Ascending aorta (tissue), 2 donors: ENCODE measurements at regions of chr1 and their contacts with region 1.

Region 1: DNA sequence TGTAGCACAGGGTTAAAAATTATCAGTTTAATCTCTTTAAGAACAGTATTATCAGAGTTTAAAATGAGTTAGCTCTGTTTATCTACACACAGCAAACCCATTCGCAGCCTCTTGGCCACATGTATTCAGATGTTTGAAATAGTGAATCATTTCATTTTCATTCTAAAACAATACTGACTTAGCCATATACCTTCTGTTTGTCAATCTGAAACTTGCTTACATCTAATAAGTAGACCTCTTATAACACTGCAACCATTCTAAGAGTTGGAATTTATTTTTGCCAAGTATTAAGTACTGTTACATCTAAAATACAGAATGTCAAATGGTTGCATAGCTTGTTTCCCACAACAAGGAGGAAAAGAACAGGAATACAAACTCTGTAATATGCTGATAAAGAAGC is 25.4 kb downstream of the ANGEL2 start:
- DNase-seq: no peak
- H3K4me3 ChIP-seq: no peak overlapping the region
- H3K27ac ChIP-seq: no peak overlapping the region
- H3K4me1 ChIP-seq: no peaks in the 10 kb centered on the region
- H3K27me3 ChIP-seq: no peaks in the 10 kb centered on the region
- CTCF ChIP-seq: no peak

Region 2: DNA sequence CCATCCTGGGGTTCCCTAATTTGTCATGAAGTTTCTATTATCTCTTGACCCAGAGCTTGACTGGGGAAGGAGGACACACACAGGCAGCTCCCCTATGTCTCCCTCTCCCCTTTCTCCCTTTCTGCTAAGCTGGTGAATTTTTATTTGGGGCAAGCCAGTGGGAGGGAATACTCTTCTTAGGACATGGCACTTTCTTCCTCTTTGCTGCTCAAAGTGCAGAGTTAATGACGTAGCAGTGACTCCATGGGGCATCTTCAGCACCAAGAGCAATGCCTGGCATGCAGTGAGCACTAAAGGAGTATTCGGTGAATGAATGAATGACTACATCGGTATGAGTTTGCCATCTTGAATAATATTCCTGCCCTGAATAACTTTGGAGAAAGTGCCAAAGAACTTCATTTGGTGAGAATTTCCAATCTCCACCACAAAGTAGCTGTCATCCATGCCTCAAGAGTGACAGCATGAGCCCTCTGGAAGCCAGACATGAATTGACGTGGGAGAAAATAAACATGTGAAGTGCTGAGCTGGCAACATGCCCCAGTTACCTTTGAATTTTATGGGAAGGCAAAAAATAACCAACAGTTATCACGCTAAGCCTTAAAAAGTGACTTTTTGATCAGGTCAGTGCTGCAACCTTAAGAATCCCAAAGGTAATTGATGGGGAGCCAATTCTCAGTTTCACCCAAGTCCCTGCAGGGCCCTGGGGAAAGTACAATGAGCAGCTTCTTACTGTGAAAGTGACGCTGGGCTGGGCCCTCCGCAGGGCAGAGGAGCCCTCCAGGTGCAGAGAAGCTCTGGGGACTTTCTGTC is 403.9 kb before region 1 on chr1:
- intact Hi-C with region 1: no loop called
- DNase-seq: no peak
- H3K4me3 ChIP-seq: no peak overlapping the region
- H3K27ac ChIP-seq: no peak overlapping the region
- H3K4me1 ChIP-seq: no peaks in the 10 kb centered on the region
- H3K27me3 ChIP-seq: peaks cover 4% of the 10 kb centered on the region
- CTCF ChIP-seq: no peak

Region 3: GRCh38 chr1:212665241-212666115 is 324.8 kb before region 1 on chr1:
- intact Hi-C with region 1: loop called (anchors 5 kb)
- DNase-seq: peak; percentile 42 to 88
- H3K4me3 ChIP-seq: peak overlapping the region; percentile 64 to 71
- H3K27ac ChIP-seq: peak overlapping the region; percentile 48 to 55
- H3K4me1 ChIP-seq: peaks cover 0 to 9% of the 10 kb centered on the region in 2 donors
- H3K27me3 ChIP-seq: no peaks in the 10 kb centered on the region
- CTCF ChIP-seq: peak; percentile 92 to 98 (median 94)

Region 4: DNA sequence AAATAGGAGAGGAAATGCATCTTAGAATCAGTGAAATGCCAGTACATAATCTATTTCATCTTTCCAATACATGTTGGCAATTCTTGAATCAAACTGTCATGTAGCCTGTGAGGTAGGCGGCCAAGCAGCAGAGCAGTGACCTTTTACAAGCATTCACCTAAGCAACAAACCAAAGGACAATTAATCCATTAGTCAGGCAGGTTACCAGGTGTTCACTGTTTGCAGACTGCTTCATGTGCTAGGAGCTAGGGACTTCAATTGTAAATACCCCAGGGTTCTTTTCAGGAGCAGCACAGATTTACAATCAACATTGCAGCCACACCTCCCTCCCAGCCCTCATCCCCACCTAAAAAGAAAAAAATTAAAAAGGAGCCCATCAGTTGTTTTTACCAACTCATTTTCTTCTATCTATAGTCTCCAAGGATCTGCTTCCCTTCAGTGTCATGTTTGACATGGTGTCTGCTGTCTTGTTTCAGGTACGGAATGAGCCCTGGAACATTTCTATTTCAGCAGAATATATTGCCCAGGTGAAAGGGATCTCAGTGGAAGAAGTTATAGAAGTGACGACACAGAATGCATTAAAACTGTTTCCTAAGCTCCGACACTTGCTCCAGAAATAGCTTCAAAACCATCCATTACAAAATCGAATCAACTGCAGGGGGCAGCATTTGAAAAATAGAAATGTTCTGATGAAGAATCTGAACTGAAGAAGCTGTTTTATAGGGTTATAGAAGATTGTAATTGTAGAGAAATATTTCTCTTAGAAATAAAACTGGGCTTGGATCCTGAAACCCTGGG is 175.5 kb before region 1 on chr1:
- intact Hi-C with region 1: loop called (anchors 5 kb)
- DNase-seq: no peak
- H3K4me3 ChIP-seq: no peak overlapping the region
- H3K27ac ChIP-seq: no peak overlapping the region
- H3K4me1 ChIP-seq: no peaks in the 10 kb centered on the region
- H3K27me3 ChIP-seq: no peaks in the 10 kb centered on the region
- CTCF ChIP-seq: peak in 1 of 3 experiments; percentile 21

Region 5: GRCh38 chr1:213138892-213139291 is 148.6 kb after region 1 on chr1:
- intact Hi-C with region 1: no loop called
- DNase-seq: no peak
- H3K4me3 ChIP-seq: no peak overlapping the region
- H3K27ac ChIP-seq: no peak overlapping the region
- H3K4me1 ChIP-seq: peaks cover 0 to 5% of the 10 kb centered on the region in 2 donors
- H3K27me3 ChIP-seq: no peaks in the 10 kb centered on the region
- CTCF ChIP-seq: no peak